ENCODE measurements at regions of chr1 and their contacts with region 1.

Region 1: DNA sequence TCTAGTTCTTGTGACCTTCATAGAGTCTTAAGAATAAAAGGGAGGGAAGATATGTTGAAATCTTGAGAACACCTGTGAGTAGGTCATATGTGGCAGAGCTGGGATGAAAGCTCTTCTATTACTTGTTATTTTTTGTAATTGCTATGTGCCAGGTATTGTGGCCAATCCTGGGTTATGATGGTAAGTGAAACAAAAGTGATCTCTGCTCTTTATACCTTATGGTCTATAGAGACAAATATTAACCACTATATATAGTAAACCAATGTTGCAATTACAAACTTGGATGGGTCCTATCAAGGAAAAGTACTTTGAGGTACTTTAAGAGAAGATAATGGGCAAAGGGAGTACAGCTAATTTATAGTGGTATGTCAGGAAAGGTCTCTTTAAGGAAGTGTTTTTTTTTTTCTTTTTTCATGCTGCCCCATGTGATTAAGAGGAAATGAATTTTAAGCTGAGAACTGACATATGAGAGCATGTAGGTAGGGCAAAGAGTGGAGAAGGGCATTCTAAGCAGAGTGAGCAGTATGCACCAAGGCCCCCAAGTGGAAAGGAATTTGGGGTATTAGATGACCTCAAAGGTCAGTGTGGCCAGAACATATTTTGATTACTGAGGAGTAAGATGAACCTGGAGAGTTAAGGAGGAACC is 43.3 kb downstream of the POU2F1 start:
- DNase-seq: no peak
- H3K4me3 ChIP-seq: no peak overlapping the region
- CTCF ChIP-seq: no peak
- POLR2A ChIP-seq: no peak

Region 2: DNA sequence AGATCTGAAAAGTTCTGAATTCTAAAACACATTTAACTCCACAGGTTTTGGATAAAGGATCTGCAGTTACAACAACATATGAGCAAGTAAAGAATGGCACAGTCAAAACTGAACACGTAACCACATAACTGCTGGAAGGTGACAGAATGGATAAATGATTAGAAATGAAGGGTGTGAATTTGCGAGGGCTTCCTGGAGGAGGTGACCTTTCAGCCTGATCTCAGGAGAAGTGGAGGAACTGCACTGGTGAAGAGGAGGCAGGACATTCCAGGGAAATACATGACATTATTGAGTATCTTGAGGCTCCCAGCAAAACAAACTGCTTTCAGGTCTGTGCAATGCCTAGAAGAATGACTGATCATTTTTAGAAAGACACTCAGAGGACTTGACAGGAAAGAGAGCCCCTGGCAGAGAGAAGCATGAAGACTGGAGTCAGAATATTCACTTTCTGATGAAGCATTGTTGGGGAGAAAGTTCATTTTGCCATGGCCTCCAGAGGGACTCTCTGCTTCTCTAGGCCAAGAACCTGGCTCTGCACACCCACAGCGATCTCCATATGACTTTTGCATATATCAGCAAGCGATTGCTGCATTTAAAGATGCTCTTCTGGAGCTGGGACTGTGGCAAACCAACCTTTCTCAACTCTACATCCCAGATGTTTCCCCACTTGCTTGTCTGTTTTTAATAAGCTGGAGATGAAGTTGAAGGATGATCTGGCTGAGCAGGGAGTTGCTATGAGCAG is 974.5 kb before region 1 on chr1:
- intact Hi-C with region 1: no loop called
- DNase-seq: no peak
- H3K4me3 ChIP-seq: no peak overlapping the region
- CTCF ChIP-seq: no peak
- POLR2A ChIP-seq: no peak

Region 3: GRCh38 chr1:166588741-166589140 is 675.2 kb before region 1 on chr1:
- intact Hi-C with region 1: no loop called
- DNase-seq: no peak
- H3K4me3 ChIP-seq: no peak overlapping the region
- CTCF ChIP-seq: no peak
- POLR2A ChIP-seq: no peak

Region 4: DNA sequence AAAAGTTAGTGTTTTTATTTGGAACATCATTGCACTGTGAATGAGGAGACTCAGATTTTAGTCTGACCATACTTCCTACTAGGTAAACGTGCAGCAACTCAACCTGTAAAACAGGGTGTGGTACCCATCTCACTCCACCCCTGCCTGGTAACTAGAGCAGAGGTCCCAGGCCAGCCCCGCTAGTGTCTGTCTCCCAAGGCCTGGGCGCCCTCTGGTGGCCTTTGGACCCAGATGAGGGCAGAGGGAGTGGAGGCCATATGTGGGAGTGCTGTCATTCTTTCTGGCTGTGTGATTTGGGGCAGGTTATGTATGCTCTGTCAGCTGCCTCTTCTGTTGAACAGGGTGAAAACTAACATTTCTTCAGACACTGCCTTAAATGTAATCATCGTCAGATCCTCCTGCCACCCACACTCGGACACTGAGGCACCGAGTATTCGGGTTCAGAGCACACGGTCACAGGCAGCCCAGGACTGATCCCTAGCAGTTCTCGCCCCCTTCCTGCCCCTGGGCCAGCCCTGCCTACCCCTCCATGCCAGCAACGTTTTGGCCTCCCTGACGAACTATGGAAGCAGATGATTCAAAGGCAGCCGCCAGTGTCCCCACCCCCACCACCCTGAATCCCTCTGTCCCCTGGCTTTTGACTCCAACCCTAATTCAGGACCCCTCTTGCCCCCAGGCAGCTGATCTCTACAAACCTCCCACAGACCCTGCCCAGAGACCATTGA is 178.3 kb after region 1 on chr1:
- intact Hi-C with region 1: loop called (anchors 5 kb)
- DNase-seq: peak; percentile 81 to 95
- H3K4me3 ChIP-seq: no peak overlapping the region
- CTCF ChIP-seq: no peak
- POLR2A ChIP-seq: no peak

Region 5: DNA sequence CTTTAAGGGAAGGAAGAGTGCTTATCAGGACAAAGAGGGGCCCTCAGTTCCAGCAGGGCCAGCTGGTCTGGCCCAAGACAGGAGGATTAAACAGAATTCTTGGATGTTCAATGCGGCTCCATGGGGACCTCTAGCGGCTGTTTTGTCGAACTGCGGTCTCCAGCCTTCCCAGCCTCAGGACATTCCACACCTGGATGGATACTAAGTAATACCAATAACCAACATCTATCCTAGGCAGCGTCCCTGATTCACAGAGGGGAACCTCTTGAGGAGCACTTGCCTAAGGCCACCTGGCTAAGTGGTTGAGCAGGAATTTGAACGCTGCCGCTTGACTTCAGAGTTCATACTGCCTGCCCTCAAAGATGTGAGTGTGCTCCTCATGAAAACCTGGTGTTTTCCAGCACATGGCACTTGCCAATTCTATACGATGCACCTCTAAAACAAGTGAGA is 269.9 kb after region 1 on chr1:
- intact Hi-C with region 1: loop called (anchors 10 kb)
- DNase-seq: peak in 1 of 2 donors; percentile 92
- H3K4me3 ChIP-seq: no peak overlapping the region
- CTCF ChIP-seq: no peak
- POLR2A ChIP-seq: no peak

Measured in lower leg skin (tissue), 4 donors.